PC-3 (cell line): ENCODE measurements at regions of chr6 and their contacts with region 1.

Region 1: GRCh38 chr6:85678602-85679444 is 36.1 kb upstream of the SYNCRIP start:
- DNase-seq: peak; percentile 96
- ATAC-seq: peak; percentile 83
- H3K4me3 ChIP-seq: peak overlapping the region; percentile 99
- H3K27ac ChIP-seq: peak overlapping the region; percentile 89
- H3K4me1 ChIP-seq: peaks cover 25% of the 10 kb centered on the region
- H3K27me3 ChIP-seq: no peaks in the 10 kb centered on the region
- CTCF ChIP-seq: no peak

Region 2: DNA sequence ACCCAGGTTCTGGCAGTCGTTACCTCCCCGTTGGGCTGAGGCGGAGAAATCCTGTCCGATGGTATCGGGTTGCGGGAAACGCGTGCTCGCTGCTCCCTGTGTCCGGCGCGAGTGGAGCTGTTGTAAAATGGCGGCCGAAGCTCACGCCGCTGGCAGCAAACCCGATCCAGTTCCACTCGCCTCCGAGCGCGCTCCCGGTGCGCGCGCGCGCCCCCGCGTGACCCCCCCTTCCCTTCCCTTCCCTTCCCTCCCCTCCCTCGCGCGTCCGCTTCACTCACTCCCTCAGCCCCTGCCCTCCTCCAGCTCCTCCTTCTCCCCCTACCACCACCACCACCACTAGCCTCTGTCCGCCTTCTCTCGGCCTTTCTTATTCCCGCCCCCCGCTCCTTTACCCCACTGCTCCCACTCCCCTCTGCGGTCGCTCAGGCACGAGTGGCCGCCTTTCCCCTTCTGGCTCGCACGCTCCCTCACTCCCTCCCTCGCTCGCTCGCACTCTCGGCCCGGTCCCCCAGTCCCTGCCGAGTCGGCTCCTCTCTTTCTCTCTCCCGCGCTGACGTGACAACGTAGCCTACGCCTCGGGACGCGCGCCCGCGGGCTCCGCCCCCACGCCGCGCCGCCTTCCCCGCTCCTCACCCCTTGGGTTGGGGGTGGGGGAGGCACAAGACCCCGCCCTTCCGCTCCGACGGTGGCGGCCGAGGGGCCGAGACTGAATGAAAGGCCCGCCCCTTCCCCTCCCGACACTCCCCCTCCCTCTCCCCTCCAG is 35.9 kb before region 1 on chr6 and contains the start of gene SYNCRIP:
- CTCF ChIA-PET with region 1: interaction called, 12 read pairs
- POLR2A ChIA-PET with region 1: interaction called, 60 read pairs
- intact Hi-C with region 1: loop called (anchors 1 kb)
- DNase-seq: peak; percentile 96
- ATAC-seq: peak; percentile 71
- H3K4me3 ChIP-seq: peak within 1 kb of the TSS; percentile 89
- H3K27ac ChIP-seq: peak within 1 kb of the TSS; percentile 98
- H3K4me1 ChIP-seq: peaks cover 17% of the 10 kb centered on the region
- H3K27me3 ChIP-seq: no peaks in the 10 kb centered on the region
- CTCF ChIP-seq: no peak
- total RNA-seq, gene SYNCRIP: 63.8 and 76.6 TPM in 2 replicates